CD8-positive, alpha-beta memory T cell (primary cell): ENCODE measurements at regions of chr6 and their contacts with region 1.

Region 1: GRCh38 chr6:134873500-134874388 is 76.2 kb downstream of the ALDH8A1 start:
- DNase-seq: peak in 2 of 5 donors; percentile 4 to 10
- H3K4me3 ChIP-seq: peak overlapping the region; percentile 11
- H3K4me3 Mint-ChIP-seq: peak overlapping the region; percentile 20 to 87 (median 72)
- H3K27ac ChIP-seq: no peak overlapping the region
- H3K27ac Mint-ChIP-seq: peak overlapping the region in 5 of 8 donors; percentile 43 to 90 (median 72)
- H3K4me1 ChIP-seq: peaks cover 4% of the 10 kb centered on the region
- H3K4me1 Mint-ChIP-seq: peaks cover 17 to 21% (median 20%) of the 10 kb centered on the region in 3 donors
- H3K27me3 ChIP-seq: no peaks in the 10 kb centered on the region
- H3K27me3 Mint-ChIP-seq: peaks cover 0 to 1% of the 10 kb centered on the region in 2 donors

Region 2: GRCh38 chr6:134822920-134823709 is 50.6 kb before region 1 on chr6:
- CTCF ChIA-PET with region 1: no interaction called
- POLR2A ChIA-PET with region 1: interaction called, 10 read pairs
- DNase-seq: peak in 3 of 5 donors; percentile 2 to 44 (median 38)
- H3K4me3 ChIP-seq: no peak overlapping the region
- H3K4me3 Mint-ChIP-seq: no peak overlapping the region
- H3K27ac ChIP-seq: no peak overlapping the region
- H3K27ac Mint-ChIP-seq: no peak overlapping the region
- H3K4me1 ChIP-seq: no peaks in the 10 kb centered on the region
- H3K4me1 Mint-ChIP-seq: peaks cover 0 to 3% (median 3%) of the 10 kb centered on the region in 3 donors
- H3K27me3 ChIP-seq: no peaks in the 10 kb centered on the region
- H3K27me3 Mint-ChIP-seq: peaks cover 3 to 13% of the 10 kb centered on the region in 2 donors

Region 3: DNA sequence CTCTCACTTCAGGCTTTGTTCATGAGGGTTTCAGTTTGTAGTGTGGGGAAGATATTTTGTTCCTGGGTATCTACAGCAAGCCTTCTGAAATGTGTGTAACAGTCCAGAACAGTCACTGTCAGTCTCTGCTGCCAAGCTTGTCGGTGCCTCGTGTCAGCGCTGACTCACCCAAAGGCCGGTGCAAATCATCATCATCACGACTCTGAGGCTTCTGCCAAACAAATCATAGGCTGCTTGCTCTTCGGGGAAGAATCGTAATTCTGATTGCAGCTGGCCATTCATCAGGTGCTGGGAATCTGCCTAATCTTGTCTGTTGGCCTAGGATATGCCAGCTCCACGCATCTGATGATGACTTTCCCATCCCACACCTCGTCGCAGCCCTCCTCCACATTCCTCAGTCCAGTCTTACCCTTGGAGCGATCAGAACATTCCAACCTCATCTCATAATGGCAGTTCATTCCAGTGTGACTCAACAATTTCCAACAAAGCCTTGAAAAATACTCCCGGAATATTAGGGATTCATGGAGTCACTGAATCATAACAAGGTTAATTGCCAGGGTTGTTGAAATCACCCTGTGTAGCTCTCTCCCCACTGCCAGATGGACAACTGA is 35.3 kb after region 1 on chr6:
- CTCF ChIA-PET with region 1: no interaction called
- POLR2A ChIA-PET with region 1: no interaction called
- DNase-seq: no peak
- H3K4me3 ChIP-seq: no peak overlapping the region
- H3K4me3 Mint-ChIP-seq: no peak overlapping the region
- H3K27ac ChIP-seq: no peak overlapping the region
- H3K27ac Mint-ChIP-seq: no peak overlapping the region
- H3K4me1 ChIP-seq: no peaks in the 10 kb centered on the region
- H3K4me1 Mint-ChIP-seq: no peaks in the 10 kb centered on the region
- H3K27me3 ChIP-seq: no peaks in the 10 kb centered on the region
- H3K27me3 Mint-ChIP-seq: peaks cover 0 to 2% of the 10 kb centered on the region in 2 donors

Region 4: DNA sequence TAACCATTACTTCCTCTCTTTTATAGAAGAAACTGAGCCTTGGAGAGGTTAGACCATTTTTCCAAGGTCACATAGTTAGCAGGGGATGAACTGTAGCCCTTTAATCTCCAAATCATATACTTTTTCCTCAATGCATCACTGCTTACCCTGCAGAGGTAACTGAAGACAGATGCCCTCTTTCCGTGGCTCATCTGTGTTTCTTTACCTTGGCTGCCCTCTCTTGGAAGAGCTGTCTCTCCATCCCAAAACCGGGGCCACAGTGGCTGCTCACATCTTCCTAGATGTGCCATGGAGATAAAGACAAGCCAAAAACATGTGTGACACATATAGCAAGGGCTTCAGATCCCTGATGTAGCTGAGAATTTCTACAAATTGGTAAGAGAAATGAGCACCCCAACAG is 76.7 kb after region 1 on chr6:
- CTCF ChIA-PET with region 1: no interaction called
- POLR2A ChIA-PET with region 1: no interaction called
- DNase-seq: no peak
- H3K4me3 ChIP-seq: no peak overlapping the region
- H3K4me3 Mint-ChIP-seq: no peak overlapping the region
- H3K27ac ChIP-seq: no peak overlapping the region
- H3K27ac Mint-ChIP-seq: no peak overlapping the region
- H3K4me1 ChIP-seq: no peaks in the 10 kb centered on the region
- H3K4me1 Mint-ChIP-seq: no peaks in the 10 kb centered on the region
- H3K27me3 ChIP-seq: no peaks in the 10 kb centered on the region
- H3K27me3 Mint-ChIP-seq: peaks cover 0 to 2% of the 10 kb centered on the region in 2 donors

Region 5: GRCh38 chr6:134979142-134979541 is 105.4 kb after region 1 on chr6:
- CTCF ChIA-PET with region 1: no interaction called
- POLR2A ChIA-PET with region 1: no interaction called
- DNase-seq: no peak
- H3K4me3 ChIP-seq: no peak overlapping the region
- H3K4me3 Mint-ChIP-seq: no peak overlapping the region
- H3K27ac ChIP-seq: no peak overlapping the region
- H3K27ac Mint-ChIP-seq: peak overlapping the region in 4 of 8 donors; percentile 7 to 29 (median 10)
- H3K4me1 ChIP-seq: no peaks in the 10 kb centered on the region
- H3K4me1 Mint-ChIP-seq: peaks cover 17 to 35% (median 27%) of the 10 kb centered on the region in 3 donors
- H3K27me3 ChIP-seq: no peaks in the 10 kb centered on the region
- H3K27me3 Mint-ChIP-seq: no peaks in the 10 kb centered on the region